A549 (cell line): ENCODE measurements at regions of chr9 and their contacts with region 1.

Region 1: DNA sequence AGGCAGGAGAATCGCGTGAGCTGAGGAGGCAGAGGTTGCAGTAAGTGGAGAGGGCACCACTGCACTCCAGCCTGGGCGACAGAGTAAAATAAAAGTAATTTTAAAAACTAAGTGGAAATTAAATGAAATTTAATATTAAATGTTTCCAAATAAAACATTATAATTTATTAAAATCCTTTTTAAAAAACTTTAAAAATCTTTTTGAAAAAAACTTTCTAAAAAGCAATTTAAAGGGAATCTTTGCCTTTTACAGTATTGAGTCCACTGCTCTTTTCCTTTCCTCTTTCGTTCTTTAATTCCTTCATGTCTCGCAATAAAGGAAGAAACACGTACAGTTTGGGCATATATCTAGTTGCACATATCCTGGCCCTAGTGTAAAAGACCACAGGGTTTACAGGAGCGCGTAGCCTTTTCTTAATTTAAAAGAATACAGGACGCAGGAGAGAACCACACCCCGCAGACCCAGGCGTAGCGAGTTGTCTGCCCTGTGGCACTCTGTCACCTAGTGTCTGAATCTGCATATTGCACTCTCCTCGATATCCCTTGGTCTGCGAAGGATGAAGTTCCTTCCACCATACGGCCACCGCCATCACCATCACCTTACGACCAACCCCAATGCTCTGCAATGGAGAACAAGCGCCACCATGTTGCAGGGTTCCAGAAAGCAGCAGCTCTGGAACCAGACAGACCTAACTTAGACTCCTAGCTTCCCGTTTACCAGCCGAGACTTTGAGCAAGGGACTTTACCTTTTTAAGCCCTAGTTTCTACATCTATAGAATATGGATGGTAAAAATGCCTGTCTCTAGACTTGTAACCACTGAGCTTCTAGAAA is 77.6 kb upstream of the DMRT1 start:
- DNase-seq: peak; percentile 86 to 95
- ATAC-seq: peak; percentile 100
- H3K4me3 ChIP-seq: peak overlapping the region; percentile 19; the same call in 1 of the 3 replicates
- H3K27ac ChIP-seq: 0 out of 6 replicates have a peak overlapping the region, but pooled peaks of 1 of the 2 experiments have one; percentile 56
- H3K4me1 ChIP-seq: 0 out of 3 replicates have a peak, but pooled peaks cover 4% of the 10 kb centered on the region
- CTCF ChIP-seq: peak; percentile 99
- EP300 ChIP-seq: no peak
- POLR2A ChIP-seq: no peak
- RAD21 ChIP-seq: peak; percentile 98 to 100

Region 2: DNA sequence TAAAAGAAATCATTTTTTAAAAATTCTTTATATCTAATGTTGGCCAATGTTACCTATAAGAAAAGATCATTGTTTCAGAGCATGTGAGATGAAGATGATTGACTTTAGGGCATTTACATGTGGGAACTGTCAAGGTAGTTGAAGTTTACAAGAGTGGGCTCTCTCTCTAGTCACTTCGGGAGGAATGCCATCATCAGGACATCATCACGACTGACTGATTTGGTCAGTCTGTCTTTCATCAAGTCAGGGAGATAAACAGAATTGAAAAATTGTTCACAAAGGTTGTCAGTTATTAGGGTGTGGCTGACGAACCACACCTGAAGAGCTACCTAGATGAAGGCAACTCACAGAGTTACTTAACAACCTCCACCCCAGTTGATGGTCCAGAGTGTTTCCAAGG is 155.5 kb before region 1 on chr9:
- CTCF ChIA-PET with region 1: interaction called, 371 read pairs
- POLR2A ChIA-PET with region 1: no interaction called
- DNase-seq: no peak
- ATAC-seq: no peak
- H3K4me3 ChIP-seq: no peak overlapping the region
- H3K27ac ChIP-seq: no peak overlapping the region
- H3K4me1 ChIP-seq: no peaks in the 10 kb centered on the region; the same call in 2 of the 3 replicates
- CTCF ChIP-seq: no peak
- EP300 ChIP-seq: no peak
- POLR2A ChIP-seq: no peak
- RAD21 ChIP-seq: no peak

Region 3: DNA sequence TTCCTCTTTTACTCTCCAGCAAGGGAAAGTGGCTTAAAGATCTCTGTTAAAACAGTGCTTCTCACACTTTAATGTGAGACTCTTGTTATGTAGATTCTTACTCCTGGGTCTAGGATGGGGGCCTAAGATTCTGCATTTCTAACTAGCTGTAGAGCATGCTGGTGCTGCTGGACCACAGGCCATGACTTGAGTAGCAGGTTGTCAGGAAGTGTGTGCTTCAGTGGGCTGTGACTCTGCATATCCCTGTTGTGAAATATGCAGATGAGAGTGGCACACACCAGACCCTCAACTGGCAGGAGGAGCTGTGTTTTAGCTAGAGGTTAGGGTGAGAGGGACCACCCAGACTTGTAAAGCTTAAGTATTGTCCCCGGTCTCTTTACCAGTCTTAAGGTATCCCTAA is 113.5 kb before region 1 on chr9:
- CTCF ChIA-PET with region 1: interaction called, 10 read pairs
- POLR2A ChIA-PET with region 1: no interaction called
- DNase-seq: no peak
- ATAC-seq: no peak
- H3K4me3 ChIP-seq: no peak overlapping the region
- H3K27ac ChIP-seq: 0 out of 6 replicates have a peak overlapping the region, but pooled peaks of 1 of the 2 experiments have one; percentile 33
- H3K4me1 ChIP-seq: no peaks in the 10 kb centered on the region
- CTCF ChIP-seq: no peak
- EP300 ChIP-seq: no peak
- POLR2A ChIP-seq: no peak
- RAD21 ChIP-seq: no peak

Region 4: GRCh38 chr9:738209-738915 is 25.5 kb before region 1 on chr9:
- CTCF ChIA-PET with region 1: interaction called, 14 read pairs
- POLR2A ChIA-PET with region 1: no interaction called
- DNase-seq: peak; percentile 40 to 79
- ATAC-seq: peak; percentile 88 to 89
- H3K4me3 ChIP-seq: no peak overlapping the region
- H3K27ac ChIP-seq: peak overlapping the region; percentile 52 to 81
- H3K4me1 ChIP-seq: peaks cover 34% of the 10 kb centered on the region
- CTCF ChIP-seq: no peak
- EP300 ChIP-seq: no peak
- POLR2A ChIP-seq: no peak
- RAD21 ChIP-seq: no peak; a peak in 1 of 5 replicates

Region 5: GRCh38 chr9:806285-807156 is 42.6 kb after region 1 on chr9:
- CTCF ChIA-PET with region 1: interaction called, 10 read pairs
- POLR2A ChIA-PET with region 1: no interaction called
- DNase-seq: peak; percentile 48 to 50
- ATAC-seq: peak in 1 of 2 experiments; percentile 77; a peak in 3 of 6 replicates
- H3K4me3 ChIP-seq: no peak overlapping the region
- H3K27ac ChIP-seq: no peak overlapping the region
- H3K4me1 ChIP-seq: peaks cover 12% of the 10 kb centered on the region
- CTCF ChIP-seq: peak; percentile 76
- EP300 ChIP-seq: no peak
- POLR2A ChIP-seq: no peak
- RAD21 ChIP-seq: peak; percentile 79 to 81

Region 6: GRCh38 chr9:846852-847251 is 82.9 kb after region 1 on chr9:
- CTCF ChIA-PET with region 1: no interaction called
- POLR2A ChIA-PET with region 1: no interaction called
- DNase-seq: no peak
- ATAC-seq: peak; percentile 51; a peak in 4 of 6 replicates
- H3K4me3 ChIP-seq: no peak overlapping the region
- H3K27ac ChIP-seq: no peak overlapping the region
- H3K4me1 ChIP-seq: no peaks in the 10 kb centered on the region
- CTCF ChIP-seq: no peak
- EP300 ChIP-seq: no peak
- POLR2A ChIP-seq: no peak
- RAD21 ChIP-seq: no peak

Region 7: DNA sequence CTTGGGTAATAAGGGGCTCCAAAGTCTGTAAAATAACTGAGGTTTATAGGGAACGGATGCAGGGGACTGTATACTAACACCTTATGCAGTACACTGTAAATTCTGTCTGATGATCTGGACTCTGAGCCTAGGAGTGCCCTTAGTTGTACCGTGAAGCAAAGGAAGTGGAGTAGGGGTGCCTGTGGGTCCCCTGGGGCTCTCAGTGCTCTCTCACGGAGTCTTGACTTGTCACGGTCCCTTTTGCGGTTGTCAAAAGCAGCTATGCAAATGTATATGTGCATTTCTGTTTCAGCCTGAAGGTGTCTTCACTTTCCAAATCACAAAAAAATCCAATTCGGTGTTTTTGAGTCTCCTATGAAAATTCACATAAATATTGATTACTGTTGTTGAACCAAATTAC is 95.3 kb after region 1 on chr9:
- CTCF ChIA-PET with region 1: no interaction called
- POLR2A ChIA-PET with region 1: no interaction called
- DNase-seq: no peak
- ATAC-seq: no peak
- H3K4me3 ChIP-seq: no peak overlapping the region
- H3K27ac ChIP-seq: no peak overlapping the region
- H3K4me1 ChIP-seq: no peaks in the 10 kb centered on the region
- CTCF ChIP-seq: no peak
- EP300 ChIP-seq: no peak
- POLR2A ChIP-seq: no peak
- RAD21 ChIP-seq: no peak

Region 8: DNA sequence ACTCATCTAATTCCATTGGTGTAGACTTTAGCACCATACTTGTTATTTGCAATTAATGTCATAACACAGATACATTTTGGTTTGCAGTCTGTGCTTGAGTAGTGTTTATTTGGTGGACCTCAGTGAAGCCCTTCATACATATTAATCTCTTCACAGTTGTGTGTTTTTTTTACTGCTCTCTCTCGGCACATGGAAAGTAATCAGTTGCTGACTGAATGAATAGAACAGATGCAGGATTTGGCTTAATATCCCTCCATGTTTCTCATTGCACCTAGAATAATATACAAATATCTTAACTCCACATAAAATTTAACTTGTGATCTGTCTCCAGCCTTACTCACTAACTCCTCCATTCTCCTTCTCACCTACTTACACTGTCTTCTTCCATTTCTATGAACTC is 605.4 kb after region 1 on chr9:
- CTCF ChIA-PET with region 1: no interaction called
- POLR2A ChIA-PET with region 1: no interaction called
- DNase-seq: no peak
- ATAC-seq: no peak
- H3K4me3 ChIP-seq: no peak overlapping the region
- H3K27ac ChIP-seq: no peak overlapping the region
- H3K4me1 ChIP-seq: no peaks in the 10 kb centered on the region
- CTCF ChIP-seq: no peak
- EP300 ChIP-seq: no peak
- POLR2A ChIP-seq: no peak
- RAD21 ChIP-seq: no peak